A673 (cell line): ENCODE measurements at regions of chr7 and their contacts with region 1.

Region 1: DNA sequence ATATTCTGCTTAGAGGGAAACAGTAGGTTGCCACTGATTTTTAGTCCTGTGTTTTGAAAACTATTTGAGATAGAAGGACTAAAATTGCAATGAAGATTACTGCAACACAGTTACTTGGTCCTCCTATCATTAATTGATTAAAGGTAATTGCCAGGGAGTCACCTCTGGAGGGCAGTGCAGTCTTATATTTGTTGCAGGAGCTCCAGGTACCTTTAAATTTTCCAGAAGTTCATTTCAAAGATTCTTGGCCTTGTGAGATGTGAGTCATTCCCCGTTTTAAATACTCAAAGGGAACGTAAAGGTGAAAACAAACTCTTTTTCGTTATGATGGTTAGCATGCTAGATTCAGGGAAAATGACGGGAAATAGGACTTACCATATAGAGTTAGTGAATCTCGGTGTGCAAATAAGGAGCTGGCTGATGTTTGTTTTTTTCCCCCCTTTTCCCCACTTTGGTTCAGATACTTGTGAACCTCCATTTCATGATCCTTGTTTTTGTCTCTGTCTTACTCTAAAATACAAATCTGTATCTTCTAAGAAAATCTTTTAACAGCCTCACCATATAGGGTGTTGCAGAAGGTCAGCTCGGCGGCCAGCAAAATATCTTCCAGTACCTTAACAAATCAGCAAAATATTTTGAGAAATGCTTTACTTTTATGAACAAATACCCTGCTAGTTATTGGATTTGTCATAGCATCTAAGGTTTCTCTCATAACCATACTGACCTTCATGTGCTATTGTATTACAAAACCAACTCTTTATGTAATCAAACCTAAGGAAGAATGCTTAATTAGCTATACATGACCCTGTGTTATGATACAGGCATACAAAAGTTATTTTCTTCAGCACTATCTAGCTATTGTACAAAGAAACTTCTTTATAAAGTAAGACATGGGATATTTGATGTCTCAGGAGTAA is 143.0 kb upstream of the HDAC9 start:
- DNase-seq: peak; percentile 83
- H3K4me3 ChIP-seq: no peak overlapping the region
- H3K27ac ChIP-seq: peak overlapping the region; percentile 47
- H3K4me1 ChIP-seq: peaks cover 42% of the 10 kb centered on the region
- H3K27me3 ChIP-seq: no peaks in the 10 kb centered on the region
- CTCF ChIP-seq: peak; percentile 77

Region 2: GRCh38 chr7:18330548-18330947 is 22.0 kb before region 1 on chr7:
- CTCF ChIA-PET with region 1: no interaction called
- POLR2A ChIA-PET with region 1: no interaction called
- intact Hi-C with region 1: no loop called
- DNase-seq: no peak
- H3K4me3 ChIP-seq: no peak overlapping the region
- H3K27ac ChIP-seq: no peak overlapping the region
- H3K4me1 ChIP-seq: no peaks in the 10 kb centered on the region
- H3K27me3 ChIP-seq: no peaks in the 10 kb centered on the region
- CTCF ChIP-seq: no peak

Region 3: GRCh38 chr7:18495412-18496340 is 143.1 kb after region 1 on chr7 and contains the start of gene HDAC9:
- CTCF ChIA-PET with region 1: no interaction called
- POLR2A ChIA-PET with region 1: no interaction called
- intact Hi-C with region 1: loop called (anchors 5 kb)
- DNase-seq: peak; percentile 75
- H3K4me3 ChIP-seq: peak within 1 kb of the TSS; percentile 48
- H3K27ac ChIP-seq: peak within 1 kb of the TSS; percentile 63
- H3K4me1 ChIP-seq: peaks cover 24% of the 10 kb centered on the region
- H3K27me3 ChIP-seq: no peaks in the 10 kb centered on the region
- CTCF ChIP-seq: no peak
- total RNA-seq, gene HDAC9: 28.3 and 31.9 TPM in 2 replicates

Region 4: DNA sequence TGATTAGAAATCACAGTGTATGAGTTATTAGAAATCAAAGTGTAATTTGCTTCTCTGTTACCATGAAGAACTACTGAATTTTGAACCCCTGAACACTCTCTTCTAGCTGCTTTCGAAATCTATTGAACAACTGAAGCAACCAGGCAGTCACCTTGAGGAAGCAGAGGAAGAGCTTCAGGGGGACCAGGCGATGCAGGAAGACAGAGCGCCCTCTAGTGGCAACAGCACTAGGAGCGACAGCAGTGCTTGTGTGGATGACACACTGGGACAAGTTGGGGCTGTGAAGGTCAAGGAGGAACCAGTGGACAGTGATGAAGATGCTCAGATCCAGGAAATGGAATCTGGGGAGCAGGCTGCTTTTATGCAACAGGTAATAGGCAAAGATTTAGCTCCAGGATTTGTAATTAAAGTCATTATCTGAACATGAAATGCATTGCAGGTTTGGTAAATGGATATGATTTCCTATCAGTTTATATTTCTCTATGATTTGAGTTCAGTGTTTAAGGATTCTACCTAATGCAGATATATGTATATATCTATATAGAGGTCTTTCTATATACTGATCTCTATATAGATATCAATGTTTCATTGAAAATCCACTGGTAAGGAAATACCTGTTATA is 313.6 kb after region 1 on chr7:
- CTCF ChIA-PET with region 1: interaction called, 8 read pairs
- POLR2A ChIA-PET with region 1: no interaction called
- intact Hi-C with region 1: loop called (anchors 2 kb)
- DNase-seq: peak; percentile 87
- H3K4me3 ChIP-seq: no peak overlapping the region
- H3K27ac ChIP-seq: peak overlapping the region; percentile 73
- H3K4me1 ChIP-seq: peaks cover 42% of the 10 kb centered on the region
- H3K27me3 ChIP-seq: no peaks in the 10 kb centered on the region
- CTCF ChIP-seq: peak; percentile 99

Region 5: GRCh38 chr7:18788026-18788425 is 435.4 kb after region 1 on chr7:
- CTCF ChIA-PET with region 1: no interaction called
- POLR2A ChIA-PET with region 1: no interaction called
- intact Hi-C with region 1: loop called (anchors 10 kb)
- DNase-seq: peak; percentile 77
- H3K4me3 ChIP-seq: no peak overlapping the region
- H3K27ac ChIP-seq: peak overlapping the region; percentile 32
- H3K4me1 ChIP-seq: peaks cover 5% of the 10 kb centered on the region
- H3K27me3 ChIP-seq: no peaks in the 10 kb centered on the region
- CTCF ChIP-seq: no peak

Region 6: GRCh38 chr7:19665399-19666008 is 1312.9 kb after region 1 on chr7:
- CTCF ChIA-PET with region 1: no interaction called
- POLR2A ChIA-PET with region 1: no interaction called
- intact Hi-C with region 1: loop called (anchors 2 kb)
- DNase-seq: peak; percentile 52
- H3K4me3 ChIP-seq: no peak overlapping the region
- H3K27ac ChIP-seq: no peak overlapping the region
- H3K4me1 ChIP-seq: no peaks in the 10 kb centered on the region
- H3K27me3 ChIP-seq: peaks cover 10% of the 10 kb centered on the region
- CTCF ChIP-seq: peak; percentile 75